ENCODE measurements at regions of chr17 and their contacts with region 1.

Region 1: GRCh38 chr17:78186692-78187595 is at the starts of genes AFMID and TK1:
- DNase-seq: peak; percentile 89
- H3K4me3 Mint-ChIP-seq: peak within 1 kb of the TSS; percentile 87
- H3K27ac Mint-ChIP-seq: peak within 1 kb of the TSS; percentile 77
- H3K4me1 Mint-ChIP-seq: peaks cover 27% of the 10 kb centered on the region
- H3K27me3 Mint-ChIP-seq: no peaks in the 10 kb centered on the region
- total RNA-seq, gene AFMID: 27.8 TPM in 2 replicates
- total RNA-seq, gene TK1: 64.6 and 65.9 TPM in 2 replicates

Region 2: GRCh38 chr17:78154903-78155811 is 31.8 kb before region 1 on chr17:
- intact Hi-C with region 1: no loop called
- DNase-seq: no peak
- H3K4me3 Mint-ChIP-seq: no peak overlapping the region
- H3K27ac Mint-ChIP-seq: no peak overlapping the region
- H3K4me1 Mint-ChIP-seq: peaks cover 6% of the 10 kb centered on the region
- H3K27me3 Mint-ChIP-seq: peaks cover 3% of the 10 kb centered on the region

Region 3: GRCh38 chr17:78168242-78168902 is 18.6 kb before region 1 on chr17 and contains the start of gene SYNGR2:
- intact Hi-C with region 1: loop called (anchors 2 kb)
- DNase-seq: peak; percentile 84
- H3K4me3 Mint-ChIP-seq: peak within 1 kb of the TSS; percentile 72
- H3K27ac Mint-ChIP-seq: peak within 1 kb of the TSS; percentile 55
- H3K4me1 Mint-ChIP-seq: peaks cover 19% of the 10 kb centered on the region
- H3K27me3 Mint-ChIP-seq: no peaks in the 10 kb centered on the region
- total RNA-seq, gene SYNGR2: 92.5 and 92.9 TPM in 2 replicates

Region 4: GRCh38 chr17:78241277-78242023 is 54.5 kb after region 1 on chr17:
- intact Hi-C with region 1: no loop called
- DNase-seq: no peak
- H3K4me3 Mint-ChIP-seq: no peak overlapping the region
- H3K27ac Mint-ChIP-seq: no peak overlapping the region
- H3K4me1 Mint-ChIP-seq: no peaks in the 10 kb centered on the region
- H3K27me3 Mint-ChIP-seq: peaks cover 2% of the 10 kb centered on the region